ENCODE measurements at regions of chr15 and their contacts with region 1.

Region 1: GRCh38 chr15:43903864-43904290 is 77.1 kb downstream of the WDR76 start:
- DNase-seq: peak; percentile 68 to 82
- H3K4me3 ChIP-seq: no peak overlapping the region
- H3K4me3 Mint-ChIP-seq: no peak overlapping the region
- H3K27ac Mint-ChIP-seq: peak overlapping the region; percentile 58
- H3K4me1 ChIP-seq: no peaks in the 10 kb centered on the region
- H3K4me1 Mint-ChIP-seq: peaks cover 6% of the 10 kb centered on the region
- H3K27me3 ChIP-seq: no peaks in the 10 kb centered on the region
- H3K27me3 Mint-ChIP-seq: no peaks in the 10 kb centered on the region
- CTCF ChIP-seq: peak; percentile 65 to 94

Region 2: GRCh38 chr15:44129911-44130310 is 226.0 kb after region 1 on chr15:
- CTCF ChIA-PET with region 1: no interaction called
- POLR2A ChIA-PET with region 1: no interaction called
- intact Hi-C with region 1: loop called (anchors 10 kb)
- DNase-seq: no peak
- H3K4me3 ChIP-seq: no peak overlapping the region
- H3K4me3 Mint-ChIP-seq: no peak overlapping the region
- H3K27ac Mint-ChIP-seq: no peak overlapping the region
- H3K4me1 ChIP-seq: no peaks in the 10 kb centered on the region
- H3K4me1 Mint-ChIP-seq: no peaks in the 10 kb centered on the region
- H3K27me3 ChIP-seq: no peaks in the 10 kb centered on the region
- H3K27me3 Mint-ChIP-seq: no peaks in the 10 kb centered on the region
- CTCF ChIP-seq: no peak

Region 3: GRCh38 chr15:44219073-44219472 is 315.2 kb after region 1 on chr15:
- CTCF ChIA-PET with region 1: no interaction called
- POLR2A ChIA-PET with region 1: no interaction called
- intact Hi-C with region 1: loop called (anchors 1 kb)
- DNase-seq: no peak
- H3K4me3 ChIP-seq: no peak overlapping the region
- H3K4me3 Mint-ChIP-seq: no peak overlapping the region
- H3K27ac Mint-ChIP-seq: no peak overlapping the region
- H3K4me1 ChIP-seq: peaks cover 19% of the 10 kb centered on the region
- H3K4me1 Mint-ChIP-seq: peaks cover 6% of the 10 kb centered on the region
- H3K27me3 ChIP-seq: no peaks in the 10 kb centered on the region
- H3K27me3 Mint-ChIP-seq: no peaks in the 10 kb centered on the region
- CTCF ChIP-seq: no peak

Region 4: GRCh38 chr15:44243829-44244228 is 340.0 kb after region 1 on chr15:
- CTCF ChIA-PET with region 1: interaction called, 3 read pairs
- POLR2A ChIA-PET with region 1: no interaction called
- intact Hi-C with region 1: loop called (anchors 1 kb)
- DNase-seq: peak in 1 of 2 experiments; percentile 36
- H3K4me3 ChIP-seq: no peak overlapping the region
- H3K4me3 Mint-ChIP-seq: no peak overlapping the region
- H3K27ac Mint-ChIP-seq: no peak overlapping the region
- H3K4me1 ChIP-seq: no peaks in the 10 kb centered on the region
- H3K4me1 Mint-ChIP-seq: no peaks in the 10 kb centered on the region
- H3K27me3 ChIP-seq: no peaks in the 10 kb centered on the region
- H3K27me3 Mint-ChIP-seq: no peaks in the 10 kb centered on the region
- CTCF ChIP-seq: peak in 1 of 2 experiments; percentile 29

Measured in Caco-2 (cell line).